Activated naive CD4-positive, alpha-beta T cell treated with anti-CD3 and anti-CD28 coated beads, Interleukin-2, amount 10 ng/mL, durations not matched to agents 7 days and 5 days (primary cell): ENCODE measurements at regions of chr15 and their contacts with region 1.

Region 1: GRCh38 chr15:31488426-31489204 is 162.0 kb downstream of the KLF13 start:
- DNase-seq: peak; percentile 47
- H3K4me3 Mint-ChIP-seq: no peak overlapping the region
- H3K27ac Mint-ChIP-seq: no peak overlapping the region
- H3K4me1 Mint-ChIP-seq: peaks cover 54% of the 10 kb centered on the region
- H3K27me3 Mint-ChIP-seq: peaks cover 33% of the 10 kb centered on the region

Region 2: DNA sequence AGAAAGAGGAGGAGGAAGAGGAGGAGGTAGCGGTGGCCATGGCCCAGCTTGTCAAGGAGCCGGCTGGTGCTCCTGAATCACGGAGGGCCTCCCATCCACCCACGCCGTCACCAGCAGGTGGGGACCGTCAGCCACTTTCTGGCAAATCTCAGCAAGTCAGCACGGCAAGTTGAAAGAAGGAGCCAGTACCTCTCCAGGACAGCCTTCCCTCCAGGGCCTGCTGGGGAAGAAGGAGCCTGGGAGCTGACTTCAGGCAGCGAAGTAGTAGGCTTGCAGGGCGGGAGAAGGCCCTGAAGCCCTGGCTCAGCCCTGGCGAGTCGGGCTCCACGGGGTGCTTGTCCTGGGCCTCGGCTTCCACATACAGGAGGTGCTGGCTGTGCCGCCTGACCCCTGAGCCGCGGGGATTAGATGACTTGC is 287.9 kb before region 1 on chr15:
- CTCF ChIA-PET with region 1: interaction called, 105 read pairs
- DNase-seq: peak; percentile 88
- H3K4me3 Mint-ChIP-seq: no peak overlapping the region
- H3K27ac Mint-ChIP-seq: peak overlapping the region; percentile 19
- H3K4me1 Mint-ChIP-seq: peaks cover 51% of the 10 kb centered on the region
- H3K27me3 Mint-ChIP-seq: peaks cover 61% of the 10 kb centered on the region

Region 3: GRCh38 chr15:31326156-31326732 is 162.4 kb before region 1 on chr15:
- CTCF ChIA-PET with region 1: interaction called, 11 read pairs
- DNase-seq: peak; percentile 99
- H3K4me3 Mint-ChIP-seq: peak overlapping the region; percentile 94
- H3K27ac Mint-ChIP-seq: peak overlapping the region; percentile 99
- H3K4me1 Mint-ChIP-seq: peaks cover 63% of the 10 kb centered on the region
- H3K27me3 Mint-ChIP-seq: no peaks in the 10 kb centered on the region

Region 4: DNA sequence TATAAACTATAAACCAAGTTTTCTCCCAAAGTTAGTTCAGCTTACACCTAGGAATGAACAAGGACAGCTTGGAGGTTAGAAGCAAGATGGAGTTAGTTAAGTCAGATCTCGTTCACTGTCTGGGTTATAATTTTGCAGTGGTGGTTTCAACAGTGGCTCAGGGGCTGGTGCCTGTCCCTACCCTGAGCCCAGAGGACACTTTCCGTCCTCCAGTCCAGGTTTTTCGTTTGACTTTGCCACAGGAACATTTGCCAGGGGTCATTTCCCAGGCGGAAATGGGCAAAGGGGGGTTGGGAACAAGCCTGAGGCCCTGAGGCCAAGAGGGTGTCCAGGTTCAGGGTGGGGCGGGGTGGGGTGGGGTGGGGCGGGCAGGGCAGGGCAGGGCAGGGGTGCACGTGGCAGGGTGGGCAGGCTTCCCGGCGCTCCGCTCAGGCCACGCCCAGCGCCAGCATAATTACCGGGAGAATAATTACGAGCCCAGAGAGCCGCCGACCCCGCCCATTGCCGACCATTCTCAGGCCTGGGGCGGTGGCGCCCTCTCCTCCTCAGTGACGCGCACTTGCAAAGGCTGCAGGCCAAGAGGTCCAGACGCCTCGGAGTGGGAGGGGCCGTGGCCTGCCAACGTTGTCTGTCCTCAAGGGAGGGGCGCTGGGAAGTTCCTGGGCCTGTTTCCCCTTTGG is 91.6 kb before region 1 on chr15:
- CTCF ChIA-PET with region 1: interaction called, 12 read pairs
- DNase-seq: no peak
- H3K4me3 Mint-ChIP-seq: no peak overlapping the region
- H3K27ac Mint-ChIP-seq: no peak overlapping the region
- H3K4me1 Mint-ChIP-seq: peaks cover 59% of the 10 kb centered on the region
- H3K27me3 Mint-ChIP-seq: peaks cover 22% of the 10 kb centered on the region

Region 5: GRCh38 chr15:31442203-31443111 is 46.2 kb before region 1 on chr15:
- CTCF ChIA-PET with region 1: interaction called, 208 read pairs
- DNase-seq: no peak
- H3K4me3 Mint-ChIP-seq: peak overlapping the region; percentile 29
- H3K27ac Mint-ChIP-seq: peak overlapping the region; percentile 40
- H3K4me1 Mint-ChIP-seq: peaks cover 56% of the 10 kb centered on the region
- H3K27me3 Mint-ChIP-seq: no peaks in the 10 kb centered on the region

Region 6: GRCh38 chr15:31472636-31473384 is 15.8 kb before region 1 on chr15:
- CTCF ChIA-PET with region 1: interaction called, 71 read pairs
- DNase-seq: peak; percentile 86
- H3K4me3 Mint-ChIP-seq: peak overlapping the region; percentile 36
- H3K27ac Mint-ChIP-seq: peak overlapping the region; percentile 91
- H3K4me1 Mint-ChIP-seq: peaks cover 47% of the 10 kb centered on the region
- H3K27me3 Mint-ChIP-seq: peaks cover 6% of the 10 kb centered on the region

Region 7: DNA sequence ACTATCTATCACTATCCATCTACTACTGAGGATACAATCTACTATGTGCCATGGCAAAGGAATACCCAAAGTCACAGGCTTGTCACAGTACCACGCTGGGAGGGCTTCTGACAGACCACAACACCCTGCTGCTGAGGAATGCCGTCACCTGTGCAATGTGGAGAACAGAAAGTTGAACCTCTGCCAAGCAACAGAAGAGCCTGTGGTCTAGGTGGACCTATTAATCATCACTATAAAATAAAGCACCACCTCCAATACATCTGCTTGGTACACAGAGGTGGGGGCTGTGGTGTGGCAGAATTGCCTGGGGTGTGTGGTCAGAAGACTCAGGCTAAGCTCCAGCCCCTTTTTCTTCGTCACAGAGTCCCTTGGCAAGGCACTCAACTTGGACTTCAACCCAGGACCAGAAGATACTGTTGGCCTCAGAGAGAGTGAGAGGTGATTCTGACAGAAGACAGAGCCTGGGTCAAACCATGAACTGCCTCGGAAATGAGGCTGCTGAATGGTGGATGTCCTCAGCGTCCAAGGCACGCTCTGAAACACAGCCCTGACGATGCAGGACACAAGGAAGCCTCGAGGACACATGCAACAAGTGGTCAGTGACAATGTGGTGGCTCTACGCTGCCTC is 352.3 kb after region 1 on chr15:
- CTCF ChIA-PET with region 1: no interaction called
- DNase-seq: no peak
- H3K4me3 Mint-ChIP-seq: no peak overlapping the region
- H3K27ac Mint-ChIP-seq: no peak overlapping the region
- H3K4me1 Mint-ChIP-seq: no peaks in the 10 kb centered on the region
- H3K27me3 Mint-ChIP-seq: peaks cover 3% of the 10 kb centered on the region